Psoas muscle (tissue), 8 donors: ENCODE measurements at regions of chr1 and their contacts with region 1.

Region 1: DNA sequence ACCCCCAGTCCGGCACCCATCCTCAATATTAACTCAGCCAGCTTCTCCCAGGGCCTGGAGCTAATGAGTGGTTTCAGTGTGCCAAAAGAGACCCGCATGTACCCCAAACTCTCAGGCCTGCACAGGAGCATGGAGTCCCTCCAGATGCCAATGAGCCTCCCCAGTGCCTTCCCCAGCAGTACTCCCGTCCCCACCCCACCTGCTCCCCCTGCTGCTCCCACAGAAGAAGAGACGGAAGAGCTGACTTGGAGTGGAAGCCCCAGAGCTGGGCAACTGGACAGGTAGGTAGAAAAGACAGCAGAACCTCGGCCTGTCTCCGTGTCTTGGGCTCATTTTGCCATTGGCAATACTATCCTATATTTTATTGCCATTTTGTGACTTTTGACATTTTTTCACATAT is 45.4 kb upstream of the IPO9 start:
- DNase-seq: no peak
- ATAC-seq: no peak
- H3K4me3 ChIP-seq: no peak overlapping the region
- H3K27ac ChIP-seq: no peak overlapping the region
- H3K4me1 ChIP-seq: no peaks in the 10 kb centered on the region
- H3K27me3 ChIP-seq: peaks cover 0 to 4% (median 0%) of the 10 kb centered on the region in 3 donors
- CTCF ChIP-seq: no peak

Region 2: GRCh38 chr1:201517948-201518470 is 265.6 kb before region 1 on chr1:
- intact Hi-C with region 1: no loop called
- DNase-seq: no peak
- ATAC-seq: no peak
- H3K4me3 ChIP-seq: no peak overlapping the region
- H3K27ac ChIP-seq: no peak overlapping the region
- H3K4me1 ChIP-seq: no peaks in the 10 kb centered on the region
- H3K27me3 ChIP-seq: no peaks in the 10 kb centered on the region
- CTCF ChIP-seq: no peak

Region 3: DNA sequence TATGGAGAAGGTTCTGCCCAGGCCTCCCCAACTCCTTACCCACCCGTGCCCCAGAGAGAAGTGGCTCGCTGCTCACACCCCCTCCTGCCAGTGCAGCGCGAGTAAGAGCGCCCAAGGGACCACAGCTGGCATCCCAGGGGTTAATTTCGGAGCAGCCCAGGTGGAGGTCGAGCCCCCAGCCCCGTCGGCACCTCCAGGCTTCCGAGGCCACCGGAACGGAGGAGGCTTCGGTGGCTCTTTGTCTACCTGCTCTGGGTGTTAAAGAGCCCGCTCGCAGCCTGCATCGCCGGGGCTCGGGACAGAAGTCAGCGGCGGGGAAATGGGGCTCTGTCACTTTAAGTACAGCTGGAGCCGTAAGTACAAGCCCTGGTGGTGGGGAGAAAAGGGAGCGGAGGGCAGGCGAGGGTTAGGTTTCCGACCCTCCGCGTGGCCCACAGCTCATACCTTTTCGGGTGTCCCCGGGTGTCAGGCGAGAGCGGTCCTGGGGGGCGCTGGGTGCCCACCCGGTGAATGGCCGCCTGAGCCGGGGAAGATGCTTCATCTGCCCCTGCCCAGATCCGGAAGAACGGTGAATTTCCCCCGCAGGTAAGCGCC is 44.0 kb before region 1 on chr1:
- intact Hi-C with region 1: loop called in 1 of 2 experiments (anchors 5 kb)
- DNase-seq: peak in 1 of 2 donors; percentile 46
- ATAC-seq: peak; percentile 53 to 74 (median 66)
- H3K4me3 ChIP-seq: peak overlapping the region; percentile 61
- H3K27ac ChIP-seq: peak overlapping the region; percentile 10
- H3K4me1 ChIP-seq: peaks cover 14% of the 10 kb centered on the region
- H3K27me3 ChIP-seq: peaks cover 0 to 31% (median 0%) of the 10 kb centered on the region in 3 donors
- CTCF ChIP-seq: no peak